BJ (cell line): ENCODE measurements at regions of chr22 and their contacts with region 1.

Region 1: DNA sequence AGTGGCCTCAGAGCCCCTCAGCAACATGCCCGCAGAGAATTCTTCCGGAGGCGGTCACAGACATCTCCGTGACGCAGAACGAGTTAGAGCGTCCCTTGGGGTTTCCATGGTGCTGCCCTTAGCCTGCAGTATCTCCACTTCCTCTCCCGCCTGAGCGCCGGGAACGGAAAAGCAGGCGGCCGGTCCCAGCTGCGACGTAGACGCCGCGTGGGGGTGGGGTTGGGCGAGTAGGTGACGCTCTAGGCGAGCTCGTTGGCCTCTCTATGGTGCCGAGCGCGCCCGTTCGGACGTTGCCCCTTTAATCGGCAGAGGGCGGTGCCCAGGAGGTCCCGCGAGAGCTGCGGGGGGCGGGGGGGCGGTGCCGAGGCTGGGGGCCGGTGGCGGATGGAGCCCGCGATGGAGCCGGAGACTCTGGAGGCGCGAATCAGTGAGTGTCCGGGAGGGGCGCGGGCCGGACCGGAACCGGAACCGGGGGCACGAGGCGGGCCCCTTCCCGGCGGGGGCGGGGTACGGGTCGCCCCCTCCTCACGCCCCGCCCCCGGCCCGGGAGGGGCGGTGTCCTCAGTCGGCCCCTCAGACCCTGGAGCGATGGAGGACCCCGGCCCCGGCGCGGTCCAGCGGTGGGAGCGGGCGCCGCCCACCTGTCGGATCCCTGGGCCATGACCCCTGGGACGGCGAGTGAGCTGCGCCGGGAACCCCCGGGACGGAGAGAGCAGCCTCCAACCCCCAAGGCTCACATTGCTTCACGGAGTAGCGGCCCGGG is at the start of gene GGA1:
- DNase-seq: peak; percentile 80
- H3K4me3 ChIP-seq: peak within 1 kb of the TSS; percentile 65
- H3K27me3 ChIP-seq: peaks cover 3% of the 10 kb centered on the region; the same call in 1 of the 2 replicates
- CTCF ChIP-seq: no peak
- polyA plus RNA-seq, gene GGA1: 22.5 and 34.6 TPM in 2 replicates

Region 2: GRCh38 chr22:37538590-37539357 is 69.9 kb before region 1 on chr22:
- CTCF ChIA-PET with region 1: interaction called, 28 read pairs
- POLR2A ChIA-PET with region 1: no interaction called
- DNase-seq: peak; percentile 45
- H3K4me3 ChIP-seq: no peak overlapping the region
- H3K27me3 ChIP-seq: no peaks in the 10 kb centered on the region
- CTCF ChIP-seq: peak; percentile 93

Region 3: DNA sequence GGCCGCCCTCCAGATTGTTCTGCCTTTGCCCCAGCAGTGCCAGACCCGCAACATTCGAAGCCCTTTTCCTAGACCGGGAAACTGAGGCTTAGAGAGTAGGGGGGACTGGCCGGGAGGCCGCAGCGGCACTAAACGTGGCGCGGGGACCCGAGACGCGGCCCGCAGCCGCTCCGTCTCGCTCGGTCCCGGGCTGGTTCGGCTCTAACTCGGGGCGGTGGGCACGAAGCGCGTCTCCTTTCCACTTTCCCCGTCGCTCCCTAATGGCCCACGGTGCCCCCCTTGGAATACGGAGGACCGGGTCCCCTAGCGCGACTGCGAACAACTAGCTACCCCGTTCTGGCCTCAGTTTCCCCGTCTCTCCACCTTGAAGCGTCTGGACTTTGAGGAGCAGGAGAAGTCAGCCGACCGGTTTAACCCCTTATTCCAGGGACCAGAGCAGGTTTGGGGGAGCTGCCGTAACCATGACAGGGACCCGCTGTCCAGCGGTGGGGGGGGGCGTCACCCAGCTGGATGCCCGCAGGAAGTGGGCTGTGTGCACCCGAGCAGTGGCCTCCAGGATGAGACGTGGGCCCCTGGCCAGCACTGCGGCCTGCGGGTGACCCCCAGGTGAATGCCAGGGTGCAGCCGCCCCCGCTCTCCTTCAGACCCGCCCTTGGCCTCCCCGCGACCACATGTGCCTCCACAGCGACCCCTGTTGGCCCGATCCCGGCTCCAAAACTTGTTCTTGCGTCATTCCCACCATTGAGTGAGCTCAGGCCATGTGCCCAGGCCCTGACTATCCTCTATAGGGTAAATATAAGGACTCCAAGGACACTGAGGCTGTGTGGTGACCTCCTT is 47.2 kb before region 1 on chr22:
- CTCF ChIA-PET with region 1: interaction called, 36 read pairs
- POLR2A ChIA-PET with region 1: no interaction called
- DNase-seq: no peak
- H3K4me3 ChIP-seq: peak overlapping the region; percentile 83
- H3K27me3 ChIP-seq: no peaks in the 10 kb centered on the region
- CTCF ChIP-seq: peak; percentile 92

Region 4: GRCh38 chr22:37588546-37589215 is 20.0 kb before region 1 on chr22:
- CTCF ChIA-PET with region 1: interaction called, 25 read pairs
- POLR2A ChIA-PET with region 1: no interaction called
- DNase-seq: no peak
- H3K4me3 ChIP-seq: no peak overlapping the region
- H3K27me3 ChIP-seq: peaks cover 10% of the 10 kb centered on the region
- CTCF ChIP-seq: no peak

Region 5: GRCh38 chr22:37643225-37643847 is 34.7 kb after region 1 on chr22:
- CTCF ChIA-PET with region 1: interaction called, 17 read pairs
- POLR2A ChIA-PET with region 1: no interaction called
- DNase-seq: no peak
- H3K4me3 ChIP-seq: no peak overlapping the region
- H3K27me3 ChIP-seq: no peaks in the 10 kb centered on the region
- CTCF ChIP-seq: peak; percentile 91

Region 6: GRCh38 chr22:37792494-37792893 is 183.8 kb after region 1 on chr22:
- CTCF ChIA-PET with region 1: interaction called, 15 read pairs
- POLR2A ChIA-PET with region 1: no interaction called
- DNase-seq: no peak
- H3K4me3 ChIP-seq: no peak overlapping the region
- H3K27me3 ChIP-seq: no peaks in the 10 kb centered on the region
- CTCF ChIP-seq: no peak